ENCODE measurements at regions of chr2 and their contacts with region 1.

Region 1: DNA sequence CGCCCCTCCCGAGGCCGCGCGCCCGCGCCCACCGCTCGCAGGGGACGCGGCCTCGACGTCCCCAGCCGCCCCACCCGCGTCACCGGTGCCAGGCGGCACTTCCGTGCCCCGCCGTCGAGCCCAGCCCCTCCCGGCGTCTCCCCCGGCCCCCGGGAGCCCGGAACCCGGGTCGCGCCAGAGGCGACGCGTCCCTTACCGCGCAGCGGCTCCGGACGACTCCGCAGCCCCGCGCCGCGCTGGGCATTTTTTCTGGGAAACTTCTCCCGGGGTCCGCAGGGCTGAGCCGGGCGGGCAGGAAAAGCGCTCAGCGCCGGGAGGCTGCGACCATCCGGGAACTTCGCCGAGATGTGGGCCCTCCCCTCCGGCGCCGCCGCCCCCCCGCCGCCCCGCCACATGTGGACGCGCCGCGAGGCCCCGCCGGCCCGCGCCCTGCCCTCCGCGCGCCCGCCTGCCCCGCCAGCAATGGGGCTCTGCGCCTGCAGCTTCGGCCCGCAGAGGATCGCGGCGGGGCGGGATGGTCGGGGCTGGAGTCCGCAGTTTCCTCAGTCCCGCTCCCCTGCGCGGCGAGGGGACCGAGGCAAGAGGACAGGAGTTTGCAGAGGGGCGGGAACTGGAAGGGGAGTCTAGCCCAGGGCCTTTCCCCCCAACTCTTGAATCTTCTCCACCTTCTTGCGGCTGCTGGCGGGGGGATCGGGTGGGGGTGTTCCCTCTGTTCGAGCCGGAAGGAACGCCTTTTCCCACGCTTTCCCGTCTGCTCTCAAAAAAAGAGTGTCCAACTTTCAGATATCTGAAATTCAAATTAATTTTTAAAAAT is 81.5 kb downstream of the CHRNA1 start:
- DNase-seq: peak; percentile 32 to 81 (median 56)
- ATAC-seq: peak; percentile 74
- H3K4me3 ChIP-seq: peak overlapping the region; percentile 75
- H3K4me3 Mint-ChIP-seq: peak overlapping the region; percentile 98
- H3K27ac ChIP-seq: peak overlapping the region in 1 of 2 donors; percentile 41
- H3K27ac Mint-ChIP-seq: peak overlapping the region; percentile 91
- H3K4me1 ChIP-seq: peaks cover 38% of the 10 kb centered on the region
- H3K4me1 Mint-ChIP-seq: peaks cover 43% of the 10 kb centered on the region
- H3K27me3 ChIP-seq: no peaks in the 10 kb centered on the region
- H3K27me3 Mint-ChIP-seq: no peaks in the 10 kb centered on the region
- CTCF ChIP-seq: no peak

Region 2: DNA sequence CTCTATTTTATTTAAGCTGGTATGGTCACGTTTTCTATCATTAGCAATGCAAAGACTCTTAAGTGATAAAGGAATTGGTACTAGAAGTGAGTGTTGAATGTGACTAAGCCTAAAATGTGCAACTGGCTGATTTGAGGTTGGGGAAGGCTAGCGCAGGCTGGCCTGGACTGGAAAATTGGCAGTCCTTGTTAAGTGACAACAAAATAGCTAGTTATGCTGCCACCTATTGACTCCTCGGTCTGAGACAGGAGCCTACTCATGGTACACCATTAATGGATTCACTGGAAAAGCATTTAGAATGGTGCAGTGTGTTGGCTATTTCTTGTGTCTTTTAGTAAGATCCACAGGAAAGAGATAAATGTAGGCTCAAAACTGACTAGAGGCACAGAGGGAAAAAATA is 79.5 kb before region 1 on chr2:
- CTCF ChIA-PET with region 1: interaction called, 40 read pairs
- POLR2A ChIA-PET with region 1: interaction called, 20 read pairs
- intact Hi-C with region 1: loop called (anchors 2 kb)
- DNase-seq: peak in 12 of 14 experiments; percentile 19 to 85 (median 50)
- ATAC-seq: peak; percentile 66
- H3K4me3 ChIP-seq: no peak overlapping the region
- H3K4me3 Mint-ChIP-seq: peak overlapping the region; percentile 28
- H3K27ac ChIP-seq: no peak overlapping the region
- H3K27ac Mint-ChIP-seq: peak overlapping the region; percentile 95
- H3K4me1 ChIP-seq: peaks cover 69% of the 10 kb centered on the region
- H3K4me1 Mint-ChIP-seq: peaks cover 85% of the 10 kb centered on the region
- H3K27me3 ChIP-seq: no peaks in the 10 kb centered on the region
- H3K27me3 Mint-ChIP-seq: no peaks in the 10 kb centered on the region
- CTCF ChIP-seq: peak; percentile 84

Region 3: GRCh38 chr2:174634130-174635014 is 48.4 kb before region 1 on chr2:
- CTCF ChIA-PET with region 1: interaction called, 4 read pairs
- POLR2A ChIA-PET with region 1: interaction called, 18 read pairs
- intact Hi-C with region 1: loop called (anchors 2 to 5 kb)
- DNase-seq: peak in 13 of 14 experiments; percentile 11 to 80 (median 41)
- ATAC-seq: peak; percentile 67
- H3K4me3 ChIP-seq: peak overlapping the region; percentile 73
- H3K4me3 Mint-ChIP-seq: peak overlapping the region; percentile 94
- H3K27ac ChIP-seq: peak overlapping the region; percentile 77 to 79
- H3K27ac Mint-ChIP-seq: peak overlapping the region; percentile 95
- H3K4me1 ChIP-seq: peaks cover 32% of the 10 kb centered on the region
- H3K4me1 Mint-ChIP-seq: peaks cover 68% of the 10 kb centered on the region
- H3K27me3 ChIP-seq: no peaks in the 10 kb centered on the region
- H3K27me3 Mint-ChIP-seq: no peaks in the 10 kb centered on the region
- CTCF ChIP-seq: no peak

Region 4: DNA sequence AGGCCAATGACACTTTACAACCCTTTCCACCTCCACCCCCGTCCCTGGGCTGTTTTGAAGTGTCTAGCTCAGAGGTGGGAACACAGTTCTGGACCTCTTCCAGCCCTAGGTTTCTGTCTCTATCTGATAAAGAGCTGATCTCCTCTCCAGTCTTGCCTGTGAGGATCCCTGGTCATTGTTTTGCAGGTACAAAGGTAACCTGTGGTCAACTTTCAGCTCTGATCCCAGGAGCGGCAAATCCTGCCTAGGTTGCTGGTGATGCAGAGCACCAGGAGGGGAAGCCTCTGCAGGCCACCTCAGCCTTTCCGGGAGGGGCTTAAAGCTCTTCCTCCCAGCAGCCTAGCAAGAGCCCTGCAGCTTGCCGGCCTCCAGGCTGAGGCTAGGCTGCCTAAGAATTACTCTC is 15.4 kb before region 1 on chr2:
- CTCF ChIA-PET with region 1: interaction called, 3 read pairs
- POLR2A ChIA-PET with region 1: interaction called, 16 read pairs
- intact Hi-C with region 1: no loop called
- DNase-seq: peak in 1 of 14 experiments; percentile 26
- ATAC-seq: peak; percentile 54
- H3K4me3 ChIP-seq: no peak overlapping the region
- H3K4me3 Mint-ChIP-seq: no peak overlapping the region
- H3K27ac ChIP-seq: no peak overlapping the region
- H3K27ac Mint-ChIP-seq: peak overlapping the region; percentile 18
- H3K4me1 ChIP-seq: peaks cover 19% of the 10 kb centered on the region
- H3K4me1 Mint-ChIP-seq: peaks cover 26% of the 10 kb centered on the region
- H3K27me3 ChIP-seq: no peaks in the 10 kb centered on the region
- H3K27me3 Mint-ChIP-seq: no peaks in the 10 kb centered on the region
- CTCF ChIP-seq: no peak